Testis (tissue), 5 donors: ENCODE measurements at regions of chr6 and their contacts with region 1.

Region 1: GRCh38 chr6:24766680-24767462 is 7.9 kb upstream of the GMNN start:
- DNase-seq: no peak
- H3K4me3 ChIP-seq: no peak overlapping the region
- H3K27ac ChIP-seq: no peak overlapping the region
- H3K4me1 ChIP-seq: no peaks in the 10 kb centered on the region
- H3K27me3 ChIP-seq: no peaks in the 10 kb centered on the region
- CTCF ChIP-seq: peak in 2 of 3 experiments; percentile 26 to 43
- POLR2A ChIP-seq: no peak

Region 2: GRCh38 chr6:24581084-24581669 is 185.7 kb before region 1 on chr6:
- intact Hi-C with region 1: loop called (anchors 10 kb)
- DNase-seq: peak; percentile 89
- H3K4me3 ChIP-seq: no peak overlapping the region
- H3K27ac ChIP-seq: no peak overlapping the region
- H3K4me1 ChIP-seq: no peaks in the 10 kb centered on the region
- H3K27me3 ChIP-seq: no peaks in the 10 kb centered on the region
- CTCF ChIP-seq: peak; percentile 57 to 74 (median 63)
- POLR2A ChIP-seq: no peak